Right ventricle myocardium inferior (tissue), 1 donor: ENCODE measurements at regions of chr3 and their contacts with region 1.

Region 1: GRCh38 chr3:69161587-69162307 is 39.4 kb upstream of the LMOD3 start:
- DNase-seq: no peak
- ATAC-seq: peak; percentile 57

Region 2: DNA sequence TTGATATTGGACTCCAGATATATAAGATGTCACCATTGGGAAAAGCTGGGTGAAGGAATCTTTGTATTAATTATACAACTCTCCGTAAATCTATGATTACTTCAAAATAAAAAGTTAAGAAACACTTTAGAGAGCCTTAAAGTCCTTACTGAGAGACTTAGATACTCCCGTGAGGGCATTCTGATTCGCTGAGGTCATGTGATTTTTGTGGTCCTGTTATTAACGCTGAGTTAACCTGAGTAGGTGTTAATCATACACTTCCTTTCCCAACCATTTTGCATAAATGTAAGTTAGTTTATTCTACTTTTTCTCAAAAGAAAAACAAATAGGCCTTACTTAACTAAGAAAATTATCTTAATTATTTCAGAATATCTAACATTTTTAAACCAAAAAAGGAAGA is 27.7 kb after region 1 on chr3:
- intact Hi-C with region 1: no loop called
- DNase-seq: no peak
- ATAC-seq: no peak

Region 3: DNA sequence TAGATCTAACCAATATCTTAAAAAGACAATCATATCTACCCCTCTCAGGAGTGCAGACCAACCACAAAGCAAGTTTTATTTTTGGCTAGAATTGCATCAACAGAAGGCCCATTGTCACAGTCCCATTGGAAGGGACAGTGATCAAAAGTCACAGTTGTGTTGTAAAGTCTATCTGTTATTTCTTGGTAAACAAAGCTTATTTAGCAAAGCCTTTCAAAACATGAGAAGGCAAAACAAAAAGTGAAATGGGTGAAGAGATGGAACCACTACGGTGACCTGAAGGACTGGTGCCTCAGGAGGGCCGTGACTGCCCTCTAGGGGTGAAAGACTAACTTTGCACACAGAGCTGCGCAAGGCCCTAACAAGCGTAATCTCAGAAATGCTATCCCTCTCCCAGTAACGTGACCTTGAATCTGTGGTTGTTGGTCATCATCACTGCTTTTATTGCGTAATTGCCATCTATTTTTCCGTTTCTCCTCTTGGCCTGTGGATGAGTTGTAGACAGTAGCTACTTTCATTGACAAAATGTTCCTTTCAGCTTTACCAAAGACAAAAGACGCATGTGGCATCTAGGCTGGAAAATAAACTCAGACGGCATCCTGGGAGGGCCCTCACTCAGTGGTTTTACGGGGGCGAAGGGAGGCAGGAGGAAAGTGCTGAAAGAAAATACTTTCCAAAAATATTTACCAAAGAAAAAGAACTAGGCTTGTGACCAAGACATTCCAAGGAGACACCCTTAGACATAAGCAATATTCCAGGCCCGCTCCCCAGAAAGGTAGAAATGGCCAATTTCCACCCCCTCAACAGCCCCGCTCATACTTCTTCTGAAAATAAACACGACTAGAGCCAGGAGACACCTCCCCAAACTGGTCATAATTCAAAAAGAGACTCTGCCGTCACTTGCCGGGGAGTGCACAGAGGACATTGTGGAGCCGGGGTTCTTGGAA is 144.8 kb after region 1 on chr3:
- intact Hi-C with region 1: loop called (anchors 1 kb)
- DNase-seq: peak; percentile 76
- ATAC-seq: peak; percentile 94

Region 4: DNA sequence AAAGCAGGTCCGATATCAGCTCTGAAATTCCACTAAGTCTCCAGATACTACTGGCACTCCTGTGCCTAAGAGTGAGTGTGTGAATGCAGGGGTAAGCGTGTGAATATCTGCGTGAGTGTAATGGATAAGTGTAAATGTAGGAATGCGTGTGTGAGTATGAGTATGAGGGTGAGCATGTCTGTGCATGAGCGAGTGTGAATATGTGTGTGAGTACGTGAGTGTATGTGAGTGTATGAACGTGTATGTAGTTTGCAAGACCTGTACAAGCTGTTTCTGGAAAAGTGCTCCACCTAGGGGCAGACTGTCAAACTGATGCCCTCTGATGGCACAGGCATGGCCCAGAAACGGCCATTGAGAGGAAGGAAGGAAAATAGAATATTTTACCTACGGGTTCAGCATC is 248.5 kb after region 1 on chr3:
- intact Hi-C with region 1: loop called (anchors 5 kb)
- DNase-seq: no peak
- ATAC-seq: peak; percentile 83

Region 5: GRCh38 chr3:69425261-69425660 is 263.5 kb after region 1 on chr3:
- intact Hi-C with region 1: loop called (anchors 5 kb)
- DNase-seq: no peak
- ATAC-seq: no peak

Region 6: GRCh38 chr3:69671082-69671952 is 509.6 kb after region 1 on chr3:
- intact Hi-C with region 1: loop called (anchors 5 kb)
- DNase-seq: no peak
- ATAC-seq: peak; percentile 69